CD8-positive, alpha-beta T cell (primary cell): ENCODE measurements at regions of chr13 and their contacts with region 1.

Region 1: GRCh38 chr13:49792550-49793324 is at the start of gene KPNA3:
- DNase-seq: peak; percentile 92 to 98 (median 96)
- ATAC-seq: peak; percentile 91
- H3K4me3 ChIP-seq: peak within 1 kb of the TSS; percentile 83 to 99
- H3K4me3 Mint-ChIP-seq: peak within 1 kb of the TSS; percentile 95
- H3K27ac ChIP-seq: peak within 1 kb of the TSS; percentile 79 to 89
- H3K27ac Mint-ChIP-seq: peak within 1 kb of the TSS; percentile 96
- H3K4me1 ChIP-seq: peaks cover 21% of the 10 kb centered on the region
- H3K4me1 Mint-ChIP-seq: peaks cover 34% of the 10 kb centered on the region
- H3K27me3 ChIP-seq: peaks cover 0 to 7% of the 10 kb centered on the region in 2 experiments
- H3K27me3 Mint-ChIP-seq: peaks cover 9% of the 10 kb centered on the region
- CTCF ChIP-seq: no peak
- total RNA-seq, gene KPNA3: 22.3 to 23.5 TPM

Region 2: GRCh38 chr13:49110122-49110912 is 682.4 kb before region 1 on chr13:
- CTCF ChIA-PET with region 1: no interaction called
- POLR2A ChIA-PET with region 1: no interaction called
- intact Hi-C with region 1: loop called (anchors 10 kb)
- DNase-seq: peak; percentile 26 to 94 (median 76)
- ATAC-seq: peak; percentile 73
- H3K4me3 ChIP-seq: peak overlapping the region; percentile 62 to 78
- H3K4me3 Mint-ChIP-seq: peak overlapping the region; percentile 87
- H3K27ac ChIP-seq: peak overlapping the region; percentile 56 to 65
- H3K27ac Mint-ChIP-seq: peak overlapping the region; percentile 85
- H3K4me1 ChIP-seq: peaks cover 42% of the 10 kb centered on the region
- H3K4me1 Mint-ChIP-seq: peaks cover 49% of the 10 kb centered on the region
- H3K27me3 ChIP-seq: no peaks in the 10 kb centered on the region
- H3K27me3 Mint-ChIP-seq: no peaks in the 10 kb centered on the region
- CTCF ChIP-seq: no peak

Region 3: DNA sequence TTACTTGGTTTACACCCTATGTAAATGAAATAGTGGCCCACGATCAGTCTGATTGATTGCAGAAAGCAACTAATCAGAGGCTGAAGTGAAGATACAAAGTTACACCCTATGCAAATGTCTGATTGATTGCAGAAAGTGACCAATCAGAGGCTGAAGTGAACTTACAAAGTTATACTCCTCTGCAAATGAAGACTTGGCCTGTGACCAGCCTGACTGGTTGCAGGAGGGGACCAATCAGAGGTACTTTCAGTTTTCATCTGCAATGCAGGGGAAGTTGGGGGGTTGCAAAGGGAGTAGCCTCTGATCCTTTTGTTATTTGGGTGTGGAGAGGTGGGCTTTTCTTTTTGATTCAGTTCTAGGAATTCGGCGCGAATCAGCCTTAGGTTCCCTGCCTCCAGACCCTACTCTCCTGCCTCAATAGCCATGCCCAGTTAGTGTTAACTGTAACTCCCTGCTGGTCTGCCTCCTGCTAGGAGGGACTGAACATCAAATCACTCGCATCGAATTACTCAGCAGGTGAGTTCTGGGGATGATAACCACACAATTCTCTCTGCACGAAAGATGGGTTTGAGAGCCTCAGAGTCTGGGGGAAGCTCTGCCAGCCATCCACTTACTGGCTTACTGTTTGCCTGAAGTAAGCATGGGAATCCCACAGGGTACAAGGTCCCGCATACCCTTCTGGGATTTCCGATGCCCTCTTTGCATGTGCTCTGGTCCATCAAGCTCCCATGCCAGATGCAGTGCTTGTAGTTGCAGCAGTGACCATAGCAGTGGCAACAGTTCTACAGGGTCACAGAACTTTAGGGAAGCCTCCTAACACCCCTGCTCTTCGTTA is 156.9 kb before region 1 on chr13:
- CTCF ChIA-PET with region 1: no interaction called
- POLR2A ChIA-PET with region 1: no interaction called
- intact Hi-C with region 1: loop called in 1 of 2 experiments (anchors 1 kb)
- DNase-seq: peak in 7 of 9 experiments; percentile 14 to 87 (median 55)
- ATAC-seq: peak; percentile 87
- H3K4me3 ChIP-seq: peak overlapping the region; percentile 34 to 51
- H3K4me3 Mint-ChIP-seq: peak overlapping the region; percentile 74
- H3K27ac ChIP-seq: peak overlapping the region; percentile 22 to 61
- H3K27ac Mint-ChIP-seq: peak overlapping the region; percentile 68
- H3K4me1 ChIP-seq: peaks cover 4% of the 10 kb centered on the region
- H3K4me1 Mint-ChIP-seq: peaks cover 15% of the 10 kb centered on the region
- H3K27me3 ChIP-seq: no peaks in the 10 kb centered on the region
- H3K27me3 Mint-ChIP-seq: no peaks in the 10 kb centered on the region
- CTCF ChIP-seq: no peak

Region 4: GRCh38 chr13:49754146-49754545 is 38.6 kb before region 1 on chr13:
- CTCF ChIA-PET with region 1: no interaction called
- POLR2A ChIA-PET with region 1: no interaction called
- intact Hi-C with region 1: no loop called
- DNase-seq: no peak
- ATAC-seq: no peak
- H3K4me3 ChIP-seq: no peak overlapping the region
- H3K4me3 Mint-ChIP-seq: no peak overlapping the region
- H3K27ac ChIP-seq: no peak overlapping the region
- H3K27ac Mint-ChIP-seq: no peak overlapping the region
- H3K4me1 ChIP-seq: peaks cover 2% of the 10 kb centered on the region
- H3K4me1 Mint-ChIP-seq: peaks cover 68% of the 10 kb centered on the region
- H3K27me3 ChIP-seq: no peaks in the 10 kb centered on the region
- H3K27me3 Mint-ChIP-seq: no peaks in the 10 kb centered on the region
- CTCF ChIP-seq: no peak

Region 5: GRCh38 chr13:49936085-49936940 is 143.6 kb after region 1 on chr13 and contains the start of gene SPRYD7:
- CTCF ChIA-PET with region 1: interaction called, 3 read pairs
- POLR2A ChIA-PET with region 1: interaction called, 9 read pairs
- intact Hi-C with region 1: loop called (anchors 1 to 2 kb)
- DNase-seq: peak; percentile 82 to 97 (median 94)
- ATAC-seq: peak; percentile 85
- H3K4me3 ChIP-seq: peak within 1 kb of the TSS; percentile 81 to 98
- H3K4me3 Mint-ChIP-seq: peak within 1 kb of the TSS; percentile 88
- H3K27ac ChIP-seq: peak within 1 kb of the TSS; percentile 37 to 44
- H3K27ac Mint-ChIP-seq: peak within 1 kb of the TSS; percentile 81
- H3K4me1 ChIP-seq: peaks cover 14% of the 10 kb centered on the region
- H3K4me1 Mint-ChIP-seq: peaks cover 19% of the 10 kb centered on the region
- H3K27me3 ChIP-seq: no peaks in the 10 kb centered on the region
- H3K27me3 Mint-ChIP-seq: no peaks in the 10 kb centered on the region
- CTCF ChIP-seq: peak; percentile 62
- total RNA-seq, gene SPRYD7: 1.2 to 1.4 TPM

Region 6: GRCh38 chr13:50898338-50898737 is 1105.6 kb after region 1 on chr13:
- CTCF ChIA-PET with region 1: no interaction called
- POLR2A ChIA-PET with region 1: no interaction called
- intact Hi-C with region 1: loop called in 1 of 2 experiments (anchors 5 kb)
- DNase-seq: no peak
- ATAC-seq: no peak
- H3K4me3 ChIP-seq: no peak overlapping the region
- H3K4me3 Mint-ChIP-seq: no peak overlapping the region
- H3K27ac ChIP-seq: no peak overlapping the region
- H3K27ac Mint-ChIP-seq: no peak overlapping the region
- H3K4me1 ChIP-seq: peaks cover 10% of the 10 kb centered on the region
- H3K4me1 Mint-ChIP-seq: peaks cover 14% of the 10 kb centered on the region
- H3K27me3 ChIP-seq: no peaks in the 10 kb centered on the region
- H3K27me3 Mint-ChIP-seq: no peaks in the 10 kb centered on the region
- CTCF ChIP-seq: no peak